Endothelial cell of umbilical vein (primary cell): ENCODE measurements at regions of chr4 and their contacts with region 1.

Region 1: DNA sequence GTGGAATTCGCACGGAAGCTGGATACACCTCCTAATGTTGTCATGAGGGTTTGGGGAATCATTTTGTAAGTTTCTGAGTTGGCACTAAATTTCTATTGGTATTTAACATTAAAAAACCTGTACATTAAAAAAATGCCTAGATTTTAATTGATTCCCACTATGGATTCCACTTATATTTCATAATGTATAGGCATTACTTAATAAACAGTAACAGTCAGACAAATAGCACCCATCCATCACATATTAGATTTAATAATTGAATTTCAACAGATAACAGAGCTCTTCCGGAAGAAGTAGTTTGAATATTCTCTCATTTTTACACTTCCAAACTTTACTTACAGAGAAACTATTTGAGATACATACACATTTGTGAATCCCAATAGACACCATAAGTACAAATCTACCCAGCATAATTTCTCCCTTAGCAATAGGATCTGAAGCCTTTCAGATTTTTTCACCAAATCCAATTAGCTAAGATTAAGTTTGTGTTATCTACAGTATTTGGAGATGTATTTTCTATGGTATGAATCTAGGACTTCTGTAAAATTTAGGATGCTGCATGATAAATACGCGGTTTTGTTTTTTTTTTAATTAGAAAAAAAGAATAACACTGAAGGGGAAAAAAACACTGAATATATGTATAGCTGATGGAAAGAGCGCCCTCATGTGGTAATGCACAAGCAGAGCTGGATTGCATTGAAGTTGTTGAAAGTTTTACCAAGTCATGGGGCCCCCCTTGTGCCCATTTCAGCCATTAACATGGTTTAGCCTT is 12.2 kb upstream of the ODAM start:
- DNase-seq: peak; percentile 53
- H3K4me3 ChIP-seq: no peak overlapping the region
- H3K27ac ChIP-seq: no peak overlapping the region
- H3K4me1 ChIP-seq: no peaks in the 10 kb centered on the region
- H3K27me3 ChIP-seq: no peaks in the 10 kb centered on the region
- CTCF ChIP-seq: peak; percentile 72 to 80
- POLR2A ChIP-seq: no peak

Region 2: DNA sequence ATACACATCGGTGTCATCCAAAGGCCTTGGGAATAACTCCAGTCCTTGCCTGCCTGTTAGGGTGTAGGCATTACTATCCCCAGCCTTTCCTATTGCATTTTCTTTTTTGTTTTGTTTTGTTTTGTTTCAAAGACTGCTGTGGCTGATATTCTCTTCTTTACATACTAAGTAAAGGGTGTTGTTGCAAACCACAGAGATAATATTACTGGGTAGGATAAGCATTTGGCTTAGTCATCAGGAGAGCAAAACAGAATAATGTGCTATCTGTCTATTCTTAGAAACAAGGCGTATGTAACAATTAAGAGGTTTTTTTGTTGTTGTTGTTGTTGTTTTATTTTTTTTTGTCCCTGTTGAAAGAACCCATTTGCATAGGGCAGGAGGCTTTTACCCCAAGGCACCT is 861.3 kb before region 1 on chr4:
- CTCF ChIA-PET with region 1: interaction called, 17 read pairs
- POLR2A ChIA-PET with region 1: no interaction called
- dilution Hi-C with region 1: no loop called
- intact Hi-C with region 1: loop called (anchors 2 kb)
- DNase-seq: no peak
- H3K4me3 ChIP-seq: no peak overlapping the region
- H3K27ac ChIP-seq: no peak overlapping the region
- H3K4me1 ChIP-seq: no peaks in the 10 kb centered on the region
- H3K27me3 ChIP-seq: no peaks in the 10 kb centered on the region
- CTCF ChIP-seq: no peak
- POLR2A ChIP-seq: no peak

Region 3: GRCh38 chr4:70197842-70198241 is 14.5 kb after region 1 on chr4:
- CTCF ChIA-PET with region 1: interaction called, 36 read pairs
- POLR2A ChIA-PET with region 1: no interaction called
- dilution Hi-C with region 1: no loop called
- intact Hi-C with region 1: no loop called
- DNase-seq: no peak
- H3K4me3 ChIP-seq: no peak overlapping the region
- H3K27ac ChIP-seq: no peak overlapping the region
- H3K4me1 ChIP-seq: no peaks in the 10 kb centered on the region
- H3K27me3 ChIP-seq: no peaks in the 10 kb centered on the region
- CTCF ChIP-seq: no peak
- POLR2A ChIP-seq: no peak

Region 4: DNA sequence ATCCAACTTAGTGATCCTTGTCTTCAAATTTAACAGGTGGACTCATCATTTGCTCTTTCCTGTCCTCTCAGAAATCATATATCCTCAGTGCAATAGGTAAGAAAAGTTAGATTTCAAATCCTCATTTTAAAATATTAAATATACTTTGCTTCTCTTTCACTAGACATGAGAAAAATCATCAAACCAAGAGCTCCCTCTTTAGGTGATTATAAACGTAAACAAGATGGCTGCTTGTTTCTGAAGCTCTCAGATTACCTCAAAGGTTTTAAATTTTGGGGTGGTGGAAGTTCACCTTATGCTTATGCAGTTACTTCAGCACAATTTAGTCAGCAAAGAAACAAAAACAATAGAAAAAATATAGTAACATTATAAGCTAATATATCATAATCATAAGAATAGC is 86.3 kb after region 1 on chr4:
- CTCF ChIA-PET with region 1: interaction called, 17 read pairs
- POLR2A ChIA-PET with region 1: no interaction called
- dilution Hi-C with region 1: no loop called
- intact Hi-C with region 1: loop called (anchors 1 kb)
- DNase-seq: peak; percentile 10
- H3K4me3 ChIP-seq: no peak overlapping the region
- H3K27ac ChIP-seq: no peak overlapping the region
- H3K4me1 ChIP-seq: no peaks in the 10 kb centered on the region
- H3K27me3 ChIP-seq: no peaks in the 10 kb centered on the region
- CTCF ChIP-seq: peak in 1 of 2 donors; percentile 7
- POLR2A ChIP-seq: no peak

Region 5: DNA sequence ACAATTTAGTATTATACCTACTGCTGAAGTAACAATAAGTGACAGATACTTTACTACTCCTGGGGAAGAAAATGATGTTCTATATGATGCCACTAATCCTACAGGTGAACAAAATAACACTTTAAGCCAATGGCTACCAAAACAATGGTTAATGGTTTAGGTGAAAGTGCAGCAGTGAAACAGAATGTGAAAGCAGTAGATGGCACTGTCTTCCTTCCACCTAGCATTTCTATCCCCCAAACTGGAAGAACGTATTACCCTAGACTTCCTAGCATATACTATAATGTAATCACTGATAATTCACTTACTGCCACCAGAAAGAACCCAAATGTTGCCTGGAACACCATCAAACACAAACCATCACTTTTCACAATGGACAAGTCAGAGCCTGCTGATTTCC is 132.6 kb after region 1 on chr4:
- CTCF ChIA-PET with region 1: no interaction called
- POLR2A ChIA-PET with region 1: no interaction called
- dilution Hi-C with region 1: no loop called
- intact Hi-C with region 1: no loop called
- DNase-seq: no peak
- H3K4me3 ChIP-seq: no peak overlapping the region
- H3K27ac ChIP-seq: no peak overlapping the region
- H3K4me1 ChIP-seq: no peaks in the 10 kb centered on the region
- H3K27me3 ChIP-seq: no peaks in the 10 kb centered on the region
- CTCF ChIP-seq: no peak
- POLR2A ChIP-seq: no peak

Region 6: DNA sequence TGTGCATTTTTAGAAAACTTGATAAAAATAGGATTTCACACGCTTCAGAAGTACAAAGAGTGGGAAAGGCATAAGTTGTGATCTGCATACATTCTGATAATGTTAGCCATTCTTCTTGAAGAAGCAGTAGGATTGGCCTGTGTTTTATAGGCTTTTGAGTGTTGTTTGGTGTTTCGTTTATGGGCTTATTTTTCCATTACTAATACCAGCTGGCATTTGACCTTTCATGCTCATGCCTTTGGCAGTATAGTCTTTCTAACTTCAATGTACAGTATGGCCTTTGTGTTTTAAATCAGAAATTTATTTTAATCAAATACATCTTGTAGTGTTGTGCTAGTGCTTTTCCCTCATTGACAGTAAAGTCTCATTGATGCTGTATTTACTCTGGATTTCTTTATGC is 1104.0 kb after region 1 on chr4:
- CTCF ChIA-PET with region 1: no interaction called
- POLR2A ChIA-PET with region 1: no interaction called
- dilution Hi-C with region 1: no loop called
- intact Hi-C with region 1: no loop called
- DNase-seq: no peak
- H3K4me3 ChIP-seq: no peak overlapping the region
- H3K27ac ChIP-seq: no peak overlapping the region
- H3K4me1 ChIP-seq: no peaks in the 10 kb centered on the region
- H3K27me3 ChIP-seq: no peaks in the 10 kb centered on the region
- CTCF ChIP-seq: no peak
- POLR2A ChIP-seq: no peak